AG04449 (cell line): ENCODE measurements at regions of chr16 and their contacts with region 1.

Region 1: GRCh38 chr16:67959520-67959919 is 8.9 kb downstream of the SLC12A4 start:
- DNase-seq: no peak
- H3K4me3 ChIP-seq: no peak overlapping the region
- CTCF ChIP-seq: no peak

Region 2: GRCh38 chr16:67935402-67936123 is 24.0 kb before region 1 on chr16:
- CTCF ChIA-PET with region 1: interaction called, 34 read pairs
- POLR2A ChIA-PET with region 1: interaction called, 11 read pairs
- DNase-seq: peak; percentile 56
- H3K4me3 ChIP-seq: peak overlapping the region; percentile 100
- CTCF ChIP-seq: no peak

Region 3: GRCh38 chr16:67942200-67942509 is 17.4 kb before region 1 on chr16:
- CTCF ChIA-PET with region 1: interaction called, 34 read pairs
- POLR2A ChIA-PET with region 1: no interaction called
- DNase-seq: no peak
- H3K4me3 ChIP-seq: no peak overlapping the region
- CTCF ChIP-seq: peak; percentile 73